Activated CD4-positive, alpha-beta T cell treated with anti-CD3 and anti-CD28 coated beads for 36 hours (primary cell): ENCODE measurements at regions of chr16 and their contacts with region 1.

Region 1: GRCh38 chr16:3443108-3444031 is at the starts of genes NAA60 and ZNF597:
- DNase-seq: peak; percentile 88
- ATAC-seq: peak; percentile 91
- H3K4me3 Mint-ChIP-seq: peak within 1 kb of the TSS; percentile 97
- H3K27ac Mint-ChIP-seq: peak within 1 kb of the TSS; percentile 93
- H3K4me1 Mint-ChIP-seq: peaks cover 13% of the 10 kb centered on the region
- H3K27me3 Mint-ChIP-seq: no peaks in the 10 kb centered on the region
- total RNA-seq, gene NAA60: 25.9 to 38.9 TPM
- total RNA-seq, gene ZNF597: 1.9 to 2.4 TPM

Region 2: GRCh38 chr16:3364774-3365427 is 78.5 kb before region 1 on chr16:
- CTCF ChIA-PET with region 1: no interaction called
- POLR2A ChIA-PET with region 1: no interaction called
- intact Hi-C with region 1: loop called in 1 of 2 experiments (anchors 5 kb)
- DNase-seq: peak; percentile 94
- ATAC-seq: peak; percentile 98
- H3K4me3 Mint-ChIP-seq: peak overlapping the region; percentile 76
- H3K27ac Mint-ChIP-seq: peak overlapping the region; percentile 91
- H3K4me1 Mint-ChIP-seq: peaks cover 8% of the 10 kb centered on the region
- H3K27me3 Mint-ChIP-seq: peaks cover 6% of the 10 kb centered on the region

Region 3: DNA sequence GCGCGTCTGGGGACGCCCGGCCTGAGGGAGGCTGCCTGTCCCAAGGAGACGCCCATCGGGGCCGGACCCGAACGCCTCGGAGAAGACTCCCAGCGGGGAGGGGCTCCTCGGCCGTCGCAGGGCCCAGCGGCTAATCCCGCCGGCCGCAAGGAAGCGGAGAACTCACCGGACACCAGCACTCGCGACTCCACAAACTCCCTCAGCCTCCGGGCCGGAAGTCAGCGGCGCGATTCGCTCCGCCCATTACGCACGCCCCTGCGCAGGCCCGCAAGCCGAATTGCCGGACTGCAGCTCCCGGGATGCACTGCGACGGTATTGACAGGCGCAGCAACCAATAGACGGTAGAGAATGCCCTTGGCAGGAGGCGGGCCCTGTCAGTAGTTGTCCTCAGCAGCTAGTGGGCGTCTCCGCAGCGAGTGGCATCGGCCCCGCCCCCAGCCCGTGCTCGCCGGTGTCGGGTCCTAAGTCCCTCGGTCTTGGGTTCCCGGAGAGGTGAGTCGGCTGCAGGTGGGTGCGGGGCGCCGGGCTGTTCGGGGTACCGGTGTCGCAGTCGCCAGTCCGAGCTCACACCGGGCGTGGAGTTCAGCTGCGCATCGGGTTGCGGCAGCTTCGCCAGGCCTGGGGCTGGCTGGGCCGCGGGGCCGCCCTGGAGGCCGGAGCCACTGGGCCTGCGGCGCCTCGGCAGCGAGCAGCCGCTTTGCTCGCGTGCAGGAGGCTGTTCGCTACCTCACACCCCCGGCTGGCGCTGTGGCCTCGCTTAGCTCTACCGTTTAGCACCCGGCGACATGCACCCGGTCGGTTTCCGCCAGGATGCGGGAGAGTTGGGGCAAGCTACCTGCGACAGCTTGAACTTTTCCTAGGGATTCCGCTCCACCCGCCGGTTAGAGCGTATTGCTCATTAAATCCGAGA is 42.3 kb before region 1 on chr16 and contains the starts of genes ZNF174 and ZSCAN32:
- CTCF ChIA-PET with region 1: interaction called, 6 read pairs
- POLR2A ChIA-PET with region 1: interaction called, 8 read pairs
- intact Hi-C with region 1: loop called in 1 of 2 experiments (anchors 1 kb)
- DNase-seq: peak; percentile 99
- ATAC-seq: peak; percentile 99
- H3K4me3 Mint-ChIP-seq: peak within 1 kb of the TSS; percentile 91
- H3K27ac Mint-ChIP-seq: peak within 1 kb of the TSS; percentile 83
- H3K4me1 Mint-ChIP-seq: peaks cover 49% of the 10 kb centered on the region
- H3K27me3 Mint-ChIP-seq: no peaks in the 10 kb centered on the region
- total RNA-seq, gene ZNF174: 7.4 to 9.5 TPM
- total RNA-seq, gene ZSCAN32: 15.7 to 17.4 TPM

Region 4: DNA sequence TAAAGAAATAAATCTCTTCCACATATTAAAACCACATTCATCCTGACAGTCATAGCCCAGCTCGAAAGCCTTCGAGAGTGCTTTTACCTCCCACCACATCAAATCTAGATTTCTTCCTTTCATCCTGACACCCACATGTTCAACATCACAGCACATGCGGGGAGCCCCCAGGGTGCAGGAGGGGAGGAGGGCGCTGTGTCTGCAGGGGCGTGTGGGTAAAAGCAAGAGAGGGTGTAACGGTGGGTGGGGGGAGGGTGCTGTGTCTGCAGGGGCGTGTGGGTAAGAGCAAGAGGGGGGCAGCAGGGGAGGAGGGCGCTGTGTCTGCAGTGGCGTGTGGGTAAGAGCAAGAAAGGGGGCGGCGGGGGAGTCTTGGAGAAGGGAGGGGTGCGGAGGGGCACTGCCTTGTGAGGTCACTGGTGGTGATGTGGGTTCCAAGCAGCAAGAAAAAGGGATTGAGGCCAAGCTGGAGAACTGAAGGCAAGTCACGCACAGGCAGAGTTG is 638.2 kb after region 1 on chr16:
- CTCF ChIA-PET with region 1: no interaction called
- POLR2A ChIA-PET with region 1: interaction called, 12 read pairs
- intact Hi-C with region 1: no loop called
- DNase-seq: peak; percentile 70
- ATAC-seq: peak; percentile 69
- H3K4me3 Mint-ChIP-seq: peak overlapping the region; percentile 14
- H3K27ac Mint-ChIP-seq: no peak overlapping the region
- H3K4me1 Mint-ChIP-seq: peaks cover 50% of the 10 kb centered on the region
- H3K27me3 Mint-ChIP-seq: no peaks in the 10 kb centered on the region